ENCODE measurements at regions of chr2 and their contacts with region 1.

Region 1: DNA sequence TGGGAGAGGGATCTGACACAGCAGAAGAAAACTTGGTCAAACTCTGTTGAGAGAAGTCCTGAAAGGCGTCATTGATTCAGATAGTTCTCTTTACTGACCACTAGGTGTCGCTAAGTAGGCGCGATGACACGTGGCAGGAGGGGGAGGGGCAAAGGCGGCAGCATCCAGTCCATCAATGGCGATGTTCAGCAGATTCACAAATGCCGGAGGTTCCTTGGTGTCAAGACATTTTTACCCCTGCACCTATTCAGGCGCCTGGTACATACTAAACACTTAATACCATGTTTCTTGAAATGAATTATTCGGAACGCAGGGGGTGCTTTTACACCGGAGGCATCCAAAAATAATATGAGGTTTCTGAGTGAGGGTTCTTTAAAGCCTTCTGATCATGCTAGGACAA is 3.0 kb upstream of the PLEK start:
- DNase-seq: peak; percentile 21 to 34
- ATAC-seq: peak in 1 of 2 donors; percentile 52
- H3K4me3 ChIP-seq: no peak overlapping the region
- H3K27ac ChIP-seq: no peak overlapping the region
- H3K4me1 ChIP-seq: no peaks in the 10 kb centered on the region
- H3K27me3 ChIP-seq: no peaks in the 10 kb centered on the region
- CTCF ChIP-seq: peak; percentile 31 to 55 (median 46)
- POLR2A ChIP-seq: no peak

Region 2: DNA sequence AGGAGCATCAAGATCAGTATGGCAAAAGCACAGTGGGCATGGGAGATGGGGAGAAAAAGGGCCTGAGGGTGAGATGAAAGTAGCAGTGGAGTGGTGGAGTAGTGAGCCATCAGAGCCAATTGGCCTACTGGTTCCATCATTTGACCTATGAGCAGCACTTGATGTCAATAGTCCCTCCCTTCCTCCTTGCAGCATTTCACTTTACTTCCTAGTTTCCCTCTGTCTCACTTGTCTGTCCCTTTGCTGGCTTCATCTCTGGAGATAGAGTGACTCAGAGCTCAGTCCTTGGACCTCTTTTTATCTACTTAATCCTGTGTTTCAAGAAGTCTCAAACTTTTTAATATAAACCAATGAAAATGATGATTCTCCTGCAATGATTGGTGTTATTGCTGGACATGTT is 72.9 kb after region 1 on chr2:
- in situ Hi-C with region 1: loop called in 2 of 4 experiments (anchors 10 kb)
- intact Hi-C with region 1: loop called (anchors 5 kb)
- DNase-seq: no peak
- ATAC-seq: no peak
- H3K4me3 ChIP-seq: no peak overlapping the region
- H3K27ac ChIP-seq: no peak overlapping the region
- H3K4me1 ChIP-seq: peaks cover 3 to 5% of the 10 kb centered on the region in 2 donors
- H3K27me3 ChIP-seq: no peaks in the 10 kb centered on the region
- CTCF ChIP-seq: no peak
- POLR2A ChIP-seq: no peak

Region 3: DNA sequence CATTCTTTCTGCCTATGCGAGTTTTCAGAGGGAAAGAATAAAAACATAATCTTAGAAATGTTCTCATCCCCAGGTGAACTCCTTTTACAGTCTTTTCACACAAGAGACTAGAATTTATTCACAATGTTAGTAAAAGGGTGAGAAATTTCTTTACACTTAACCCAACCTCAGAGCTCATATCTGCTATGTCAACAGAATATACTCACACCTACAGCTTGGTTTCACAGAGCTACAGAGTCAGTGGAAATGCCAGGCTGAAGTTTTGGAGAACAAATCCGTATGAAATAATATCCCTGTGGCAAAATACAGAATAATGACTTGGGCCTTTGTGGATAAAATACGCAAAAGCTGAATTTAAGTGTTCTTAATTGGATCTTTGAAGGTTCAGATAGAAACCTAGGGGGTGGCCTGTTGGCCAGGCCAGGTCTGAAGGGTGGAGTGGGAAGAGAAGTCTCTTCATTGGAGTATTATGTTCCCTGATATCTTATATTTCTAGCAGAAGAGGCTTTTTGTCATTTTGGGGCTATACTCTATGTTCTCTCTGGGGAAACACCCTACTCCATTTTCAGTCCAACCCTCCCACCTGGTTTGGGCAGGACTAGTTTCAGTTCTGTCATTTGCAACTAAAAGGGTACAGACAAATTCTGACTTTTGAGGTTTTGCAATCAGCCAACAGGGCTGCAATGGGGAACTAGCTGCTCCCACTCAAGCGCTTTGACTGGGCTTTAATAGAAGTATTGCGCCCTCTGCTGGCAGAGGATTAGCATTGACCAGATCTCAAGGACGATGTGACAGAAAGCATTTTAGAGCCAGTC is 79.3 kb after region 1 on chr2:
- in situ Hi-C with region 1: loop called in 2 of 4 experiments (anchors 10 kb)
- intact Hi-C with region 1: loop called (anchors 5 kb)
- DNase-seq: peak; percentile 66 to 68
- ATAC-seq: peak; percentile 94 to 96
- H3K4me3 ChIP-seq: no peak overlapping the region
- H3K27ac ChIP-seq: no peak overlapping the region
- H3K4me1 ChIP-seq: no peaks in the 10 kb centered on the region
- H3K27me3 ChIP-seq: no peaks in the 10 kb centered on the region
- CTCF ChIP-seq: peak; percentile 70 to 87 (median 80)
- POLR2A ChIP-seq: no peak